Right ventricle myocardium inferior (tissue), 1 donor: ENCODE measurements at regions of chr9 and their contacts with region 1.

Region 1: GRCh38 chr9:37876376-37876775 is 27.6 kb downstream of the SLC25A51 start:
- DNase-seq: no peak
- ATAC-seq: no peak

Region 2: GRCh38 chr9:37827473-37828165 is 48.8 kb before region 1 on chr9:
- intact Hi-C with region 1: loop called (anchors 5 kb)
- DNase-seq: no peak
- ATAC-seq: no peak

Region 3: DNA sequence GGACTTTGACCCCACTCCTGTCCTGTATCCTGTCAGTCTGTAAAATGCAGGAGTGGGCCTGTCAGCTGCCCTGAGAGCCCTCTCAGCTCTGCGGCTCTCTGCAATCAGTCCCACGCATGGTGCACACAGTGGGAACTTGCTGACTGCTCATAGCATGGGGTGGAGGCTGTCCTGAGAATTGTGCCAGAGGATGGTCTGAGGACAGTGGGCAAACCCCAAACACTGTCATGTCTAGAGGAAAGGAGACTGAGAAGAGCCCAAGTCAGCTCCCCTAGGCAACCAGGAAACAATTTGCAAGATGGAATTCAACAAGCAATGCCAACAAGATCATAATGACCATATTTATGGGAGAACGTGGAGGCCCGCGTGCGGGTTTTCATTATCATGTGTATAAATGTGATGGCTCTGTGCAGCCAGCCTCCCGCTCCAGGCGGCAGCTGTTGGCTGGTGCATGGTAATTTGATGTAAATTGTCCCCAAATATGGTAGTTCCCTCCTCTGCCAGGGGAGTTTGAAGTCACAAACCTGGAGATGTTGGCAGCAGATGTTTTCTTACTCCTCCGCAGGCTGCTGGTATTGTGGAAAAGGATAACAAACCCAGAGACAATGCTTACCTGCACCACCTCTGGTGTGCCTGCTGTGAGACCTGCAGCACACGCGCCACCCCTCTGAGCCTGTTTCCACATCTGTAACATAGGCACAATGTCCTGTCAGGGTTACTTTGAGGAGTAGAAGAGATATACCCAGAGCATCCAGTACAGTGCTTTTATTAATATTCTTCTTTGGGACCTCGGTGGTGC is 476.4 kb after region 1 on chr9:
- intact Hi-C with region 1: no loop called
- DNase-seq: peak; percentile 56
- ATAC-seq: no peak